ENCODE measurements at regions of chrX and their contacts with region 1.

Region 1: DNA sequence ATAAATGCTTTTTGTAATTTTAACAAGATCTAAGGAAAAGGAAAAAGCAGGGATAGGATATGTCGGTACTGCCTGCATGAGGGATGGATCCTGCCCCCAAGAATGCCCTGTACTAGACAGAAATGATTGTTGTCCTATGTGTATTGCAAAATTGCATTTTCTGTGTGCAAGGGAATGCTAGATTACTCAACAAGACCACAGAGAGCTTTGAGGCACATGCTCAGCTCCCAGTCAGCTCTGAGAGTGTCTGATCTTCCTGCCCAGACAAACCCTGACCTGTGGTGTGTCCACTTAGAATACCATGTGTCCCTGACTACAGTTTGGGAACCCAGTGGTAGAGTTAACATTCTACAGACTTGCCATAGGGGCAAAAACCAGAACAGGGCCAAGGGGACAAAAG is 129.2 kb upstream of the PAK3 start:
- DNase-seq: no peak
- ATAC-seq: no peak
- H3K4me3 Mint-ChIP-seq: no peak overlapping the region
- H3K27ac Mint-ChIP-seq: no peak overlapping the region
- H3K4me1 Mint-ChIP-seq: no peaks in the 10 kb centered on the region
- H3K27me3 Mint-ChIP-seq: no peaks in the 10 kb centered on the region

Region 2: DNA sequence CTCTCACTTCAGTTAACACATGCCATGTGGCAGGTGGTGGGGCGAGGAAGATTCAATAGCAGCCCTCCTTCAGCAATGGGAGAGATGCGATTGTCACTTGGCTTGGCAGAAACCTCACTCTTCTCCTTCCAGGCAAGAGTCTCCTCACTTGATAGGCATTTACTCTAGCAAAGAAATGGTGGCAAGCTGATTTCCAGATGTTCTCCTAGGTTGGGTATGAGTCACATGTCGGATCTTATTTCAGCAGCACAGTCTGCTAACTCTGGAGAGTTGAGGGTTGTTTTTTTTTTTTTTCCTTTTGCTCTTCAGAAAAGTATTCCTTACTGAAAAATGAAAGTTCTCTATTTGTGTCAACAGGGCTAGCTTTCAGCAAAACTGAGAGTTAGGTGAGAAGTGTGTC is 51.7 kb before region 1 on chrX:
- CTCF ChIA-PET with region 1: no interaction called
- POLR2A ChIA-PET with region 1: no interaction called
- intact Hi-C with region 1: loop called in 1 of 2 experiments (anchors 10 kb)
- DNase-seq: no peak
- ATAC-seq: no peak
- H3K4me3 Mint-ChIP-seq: no peak overlapping the region
- H3K27ac Mint-ChIP-seq: no peak overlapping the region
- H3K4me1 Mint-ChIP-seq: no peaks in the 10 kb centered on the region
- H3K27me3 Mint-ChIP-seq: no peaks in the 10 kb centered on the region

Measured in activated CD4-positive, alpha-beta T cell treated with anti-CD3 and anti-CD28 coated beads for 36 hours (primary cell).